Activated CD4-positive, alpha-beta T cell treated with anti-CD3 and anti-CD28 coated beads for 36 hours (primary cell): ENCODE measurements at regions of chr3 and their contacts with region 1.

Region 1: DNA sequence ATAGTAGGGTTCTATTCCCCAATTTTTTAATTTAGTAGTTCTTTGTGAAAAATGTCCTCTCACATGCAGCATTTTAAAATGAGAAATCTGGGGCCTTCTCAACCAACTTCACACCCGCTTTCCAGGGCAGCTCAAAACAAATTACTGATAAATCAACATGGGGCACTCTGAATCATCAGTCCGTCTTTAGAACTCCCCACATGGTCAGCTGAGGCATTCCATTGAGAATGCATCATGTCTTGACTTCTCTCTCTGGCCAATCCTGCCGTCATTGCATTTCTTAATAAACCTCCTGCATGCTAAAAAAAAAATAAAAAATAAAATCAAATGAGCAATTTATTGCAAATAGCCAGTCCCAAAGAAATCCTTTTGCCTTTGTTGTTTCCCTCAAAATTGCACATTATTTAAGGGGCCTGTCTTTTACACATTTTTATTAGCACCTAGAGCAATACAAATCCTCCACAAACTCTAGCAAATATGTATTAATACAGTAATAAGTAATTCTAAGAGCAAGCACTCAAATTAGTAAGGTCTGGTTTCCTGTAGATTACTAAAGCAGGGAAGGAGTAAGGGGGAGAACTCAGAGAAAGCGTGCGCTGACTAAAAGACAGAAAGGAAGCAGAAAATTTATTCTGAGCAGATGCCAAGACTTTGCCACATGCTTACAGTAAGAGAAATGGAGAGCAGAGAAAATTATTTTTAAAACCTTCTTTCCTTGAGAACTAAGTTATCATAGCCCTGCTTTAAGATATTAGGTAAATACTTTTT is 175.7 kb downstream of the TNIK start:
- DNase-seq: peak; percentile 27
- ATAC-seq: peak; percentile 62
- H3K4me3 Mint-ChIP-seq: no peak overlapping the region
- H3K27ac Mint-ChIP-seq: peak overlapping the region; percentile 62
- H3K4me1 Mint-ChIP-seq: peaks cover 65% of the 10 kb centered on the region
- H3K27me3 Mint-ChIP-seq: no peaks in the 10 kb centered on the region

Region 2: GRCh38 chr3:171187706-171188290 is 96.7 kb before region 1 on chr3:
- CTCF ChIA-PET with region 1: no interaction called
- POLR2A ChIA-PET with region 1: no interaction called
- intact Hi-C with region 1: loop called (anchors 2 kb)
- DNase-seq: no peak
- ATAC-seq: no peak
- H3K4me3 Mint-ChIP-seq: no peak overlapping the region
- H3K27ac Mint-ChIP-seq: no peak overlapping the region
- H3K4me1 Mint-ChIP-seq: peaks cover 51% of the 10 kb centered on the region
- H3K27me3 Mint-ChIP-seq: no peaks in the 10 kb centered on the region

Region 3: GRCh38 chr3:171225708-171226107 is 58.8 kb before region 1 on chr3:
- CTCF ChIA-PET with region 1: no interaction called
- POLR2A ChIA-PET with region 1: no interaction called
- intact Hi-C with region 1: loop called in 1 of 2 experiments (anchors 2 kb)
- DNase-seq: no peak
- ATAC-seq: no peak
- H3K4me3 Mint-ChIP-seq: no peak overlapping the region
- H3K27ac Mint-ChIP-seq: peak overlapping the region; percentile 72
- H3K4me1 Mint-ChIP-seq: peaks cover 46% of the 10 kb centered on the region
- H3K27me3 Mint-ChIP-seq: no peaks in the 10 kb centered on the region

Region 4: GRCh38 chr3:171257251-171258203 is 27.0 kb before region 1 on chr3:
- CTCF ChIA-PET with region 1: interaction called, 4 read pairs
- POLR2A ChIA-PET with region 1: no interaction called
- intact Hi-C with region 1: loop called (anchors 2 kb)
- DNase-seq: no peak
- ATAC-seq: peak; percentile 28
- H3K4me3 Mint-ChIP-seq: no peak overlapping the region
- H3K27ac Mint-ChIP-seq: peak overlapping the region; percentile 84
- H3K4me1 Mint-ChIP-seq: peaks cover 93% of the 10 kb centered on the region
- H3K27me3 Mint-ChIP-seq: no peaks in the 10 kb centered on the region

Region 5: DNA sequence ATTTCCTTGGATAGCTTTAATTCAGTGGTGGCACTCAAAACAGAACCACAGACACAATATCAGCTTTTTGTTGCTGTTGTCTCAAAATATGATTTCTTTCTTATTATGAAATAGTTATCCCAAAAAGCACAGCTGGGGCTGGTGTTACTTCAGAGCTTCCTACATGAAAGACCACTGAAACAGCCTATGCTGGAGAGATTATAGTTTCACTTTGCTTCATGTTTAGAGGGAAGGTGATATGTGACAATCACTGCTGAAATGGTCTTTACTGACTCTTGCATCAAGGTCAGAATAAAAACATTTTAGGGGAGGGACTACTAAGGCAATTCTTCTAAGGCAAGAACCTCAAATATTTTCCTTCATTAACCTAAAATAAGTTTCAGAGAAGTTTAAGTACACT is 14.9 kb before region 1 on chr3:
- CTCF ChIA-PET with region 1: interaction called, 6 read pairs
- POLR2A ChIA-PET with region 1: interaction called, 3 read pairs
- intact Hi-C with region 1: loop called in 1 of 2 experiments (anchors 2 kb)
- DNase-seq: no peak
- ATAC-seq: peak; percentile 51
- H3K4me3 Mint-ChIP-seq: peak overlapping the region; percentile 40
- H3K27ac Mint-ChIP-seq: no peak overlapping the region
- H3K4me1 Mint-ChIP-seq: peaks cover 82% of the 10 kb centered on the region
- H3K27me3 Mint-ChIP-seq: no peaks in the 10 kb centered on the region